ENCODE measurements at regions of chr5 and their contacts with region 1.

Region 1: DNA sequence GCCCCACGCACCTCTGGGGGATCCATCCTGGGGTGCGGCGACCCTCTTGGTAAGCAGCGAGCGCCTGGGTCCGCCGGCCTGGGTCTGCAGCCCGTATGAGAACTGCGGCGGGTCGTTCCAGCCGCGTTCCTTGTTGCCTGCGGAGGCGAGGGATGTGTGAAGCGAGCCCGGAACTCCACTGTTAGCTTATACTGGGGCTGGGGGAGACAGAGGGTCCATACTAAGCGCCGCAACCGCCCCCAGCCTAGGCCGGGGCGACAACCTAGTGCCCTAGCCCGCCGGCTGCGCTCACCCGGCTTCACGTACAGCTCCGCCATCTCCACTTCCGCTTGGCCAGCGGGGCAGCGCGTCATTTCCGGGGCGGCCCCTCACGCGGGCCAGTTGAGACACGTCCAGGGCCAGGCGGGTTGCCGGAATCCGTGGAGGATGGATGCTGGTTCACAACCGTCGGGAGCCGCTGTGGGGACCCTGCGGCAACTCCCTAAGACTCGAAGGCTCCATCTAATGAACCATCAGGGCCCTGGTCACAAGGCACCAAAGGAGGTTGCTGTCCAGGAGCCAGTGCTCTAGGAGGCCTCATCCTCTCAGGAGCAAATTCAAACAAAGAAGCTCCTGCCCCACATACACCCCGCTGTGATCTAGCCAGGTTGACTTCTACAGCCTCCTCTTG is at the start of gene SRA1:
- DNase-seq: peak; percentile 92
- H3K4me3 Mint-ChIP-seq: peak within 1 kb of the TSS; percentile 79
- H3K27ac Mint-ChIP-seq: peak within 1 kb of the TSS; percentile 93
- H3K4me1 Mint-ChIP-seq: peaks cover 46% of the 10 kb centered on the region
- H3K27me3 Mint-ChIP-seq: no peaks in the 10 kb centered on the region
- total RNA-seq, gene SRA1: 38.0 to 39.6 TPM

Region 2: DNA sequence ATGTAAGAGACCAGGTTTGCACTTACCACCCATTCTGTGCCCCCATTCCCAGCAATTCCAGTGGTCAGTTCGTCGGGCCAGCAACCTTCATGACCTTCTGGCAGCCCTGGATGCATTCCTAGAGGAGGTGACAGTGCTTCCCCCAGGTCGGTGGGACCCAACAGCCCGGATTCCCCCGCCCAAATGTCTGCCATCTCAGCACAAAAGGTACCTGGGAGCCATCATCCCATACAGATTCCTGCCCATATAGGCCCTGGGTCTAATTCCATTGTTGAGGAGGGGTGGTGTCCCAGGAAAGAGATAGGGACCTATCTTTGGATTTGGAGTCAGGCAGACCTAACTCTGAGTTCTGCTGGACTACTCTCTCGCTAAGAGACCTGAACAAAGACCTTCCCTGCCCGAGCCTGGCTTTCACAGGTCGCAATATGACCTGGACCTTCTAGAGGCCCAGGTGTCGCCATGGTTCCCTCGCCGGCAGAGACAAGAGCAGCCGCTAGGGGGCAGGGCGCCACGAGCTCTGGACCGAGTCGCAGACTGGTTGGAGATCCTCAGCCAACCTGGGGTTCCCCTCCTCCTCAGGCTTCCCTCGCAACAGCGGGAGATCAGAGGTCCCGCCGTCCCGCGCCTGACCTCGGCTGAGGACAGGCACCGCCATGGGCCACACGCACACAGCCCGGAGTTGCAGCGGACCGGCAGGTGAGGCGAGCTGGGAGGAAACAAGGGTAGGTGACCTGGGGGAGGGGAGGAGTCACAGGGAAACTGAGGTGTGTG is 194.2 kb before region 1 on chr5:
- CTCF ChIA-PET with region 1: no interaction called
- intact Hi-C with region 1: loop called (anchors 1 kb)
- DNase-seq: peak; percentile 92
- H3K4me3 Mint-ChIP-seq: peak overlapping the region; percentile 70
- H3K27ac Mint-ChIP-seq: no peak overlapping the region
- H3K4me1 Mint-ChIP-seq: peaks cover 2% of the 10 kb centered on the region
- H3K27me3 Mint-ChIP-seq: no peaks in the 10 kb centered on the region

Region 3: GRCh38 chr5:140524003-140524402 is 33.3 kb before region 1 on chr5:
- CTCF ChIA-PET with region 1: no interaction called
- intact Hi-C with region 1: no loop called
- DNase-seq: no peak
- H3K4me3 Mint-ChIP-seq: no peak overlapping the region
- H3K27ac Mint-ChIP-seq: no peak overlapping the region
- H3K4me1 Mint-ChIP-seq: no peaks in the 10 kb centered on the region
- H3K27me3 Mint-ChIP-seq: no peaks in the 10 kb centered on the region

Region 4: GRCh38 chr5:140677947-140678346 is 120.7 kb after region 1 on chr5:
- CTCF ChIA-PET with region 1: no interaction called
- intact Hi-C with region 1: no loop called
- DNase-seq: no peak
- H3K4me3 Mint-ChIP-seq: no peak overlapping the region
- H3K27ac Mint-ChIP-seq: no peak overlapping the region
- H3K4me1 Mint-ChIP-seq: peaks cover 4% of the 10 kb centered on the region
- H3K27me3 Mint-ChIP-seq: no peaks in the 10 kb centered on the region

Region 5: DNA sequence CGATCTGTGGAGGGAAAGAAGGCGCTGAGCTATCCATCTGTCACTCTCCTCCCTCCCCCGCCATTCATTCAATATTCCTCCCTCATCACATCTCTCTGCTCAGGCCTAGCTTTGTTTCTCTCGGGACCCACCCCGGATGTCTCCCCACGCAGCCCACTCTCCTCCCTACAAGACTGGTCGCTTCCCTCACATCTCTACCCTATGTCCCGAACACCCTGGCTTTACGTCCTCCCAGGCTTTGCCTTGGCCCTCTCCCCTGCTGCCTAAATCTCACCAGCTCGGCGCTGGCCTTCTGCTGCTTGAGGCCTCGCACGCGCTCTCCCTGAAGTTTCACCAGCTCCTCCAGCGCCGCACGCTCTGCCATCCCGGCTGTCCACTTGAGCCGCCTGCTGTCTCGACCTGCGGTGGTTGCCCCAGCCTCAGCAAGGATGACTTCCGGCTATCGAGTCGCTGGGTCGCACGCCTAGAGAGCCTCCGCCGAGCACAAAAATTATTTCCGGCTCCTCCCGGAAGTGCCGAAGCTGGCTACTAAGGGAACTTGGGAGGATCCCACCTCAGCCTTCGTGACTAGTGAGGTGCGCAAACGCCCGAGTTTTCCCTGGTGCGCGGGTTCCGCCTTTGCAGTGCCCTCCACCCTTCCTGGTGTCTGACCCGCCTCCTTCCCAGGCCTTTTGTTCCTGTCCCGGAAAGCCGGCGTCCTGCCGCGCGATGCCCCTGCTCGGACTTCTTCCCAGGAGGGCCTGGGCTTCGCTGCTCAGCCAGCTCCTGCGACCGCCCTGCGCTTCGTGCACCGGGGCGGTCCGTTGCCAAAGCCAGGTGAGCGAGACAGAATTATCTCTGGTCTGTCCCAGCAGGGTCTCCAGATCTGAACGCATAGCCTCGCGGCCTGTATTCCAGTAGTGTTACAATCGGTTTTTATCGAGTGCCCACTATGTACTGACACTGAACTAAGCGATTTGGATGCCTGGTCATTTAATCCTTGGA is 134.0 kb after region 1 on chr5 and contains the starts of genes HARS1 and HARS2:
- CTCF ChIA-PET with region 1: interaction called, 3 read pairs
- intact Hi-C with region 1: loop called (anchors 2 kb)
- DNase-seq: peak; percentile 92
- H3K4me3 Mint-ChIP-seq: peak within 1 kb of the TSS; percentile 100
- H3K27ac Mint-ChIP-seq: peak within 1 kb of the TSS; percentile 97
- H3K4me1 Mint-ChIP-seq: peaks cover 35% of the 10 kb centered on the region
- H3K27me3 Mint-ChIP-seq: no peaks in the 10 kb centered on the region
- total RNA-seq, gene HARS1: 69.0 to 74.8 TPM
- total RNA-seq, gene HARS2: 27.4 to 29.3 TPM

Region 6: GRCh38 chr5:140813119-140813518 is 255.8 kb after region 1 on chr5:
- CTCF ChIA-PET with region 1: no interaction called
- intact Hi-C with region 1: no loop called
- DNase-seq: no peak
- H3K4me3 Mint-ChIP-seq: no peak overlapping the region
- H3K27ac Mint-ChIP-seq: no peak overlapping the region
- H3K4me1 Mint-ChIP-seq: no peaks in the 10 kb centered on the region
- H3K27me3 Mint-ChIP-seq: peaks cover 16% of the 10 kb centered on the region